ENCODE measurements at regions of chrX and their contacts with region 1.

Region 1: DNA sequence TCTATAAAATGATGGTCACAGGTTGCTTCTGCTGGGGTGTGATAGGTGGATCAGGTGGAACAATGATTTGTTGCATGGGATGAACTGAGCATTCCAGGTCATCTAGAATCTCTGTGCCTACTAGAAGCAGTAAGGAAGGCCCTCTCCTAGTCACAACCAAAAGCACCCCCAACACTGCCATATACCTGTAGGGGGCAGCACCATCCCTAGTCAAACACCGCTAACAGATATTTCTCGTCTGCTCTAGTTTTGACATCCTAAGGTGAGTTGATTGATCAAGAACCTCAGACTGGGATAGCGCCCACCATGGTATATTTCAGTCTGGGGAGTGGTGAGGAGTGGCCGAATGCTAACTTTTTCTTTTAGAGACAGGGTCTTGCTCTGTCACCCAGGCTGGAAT is 160.2 kb downstream of the NHS start:
- DNase-seq: peak; percentile 49 to 82
- H3K4me3 ChIP-seq: no peak overlapping the region
- H3K4me1 ChIP-seq: no peaks in the 10 kb centered on the region
- H3K27me3 ChIP-seq: no peaks in the 10 kb centered on the region

Region 2: DNA sequence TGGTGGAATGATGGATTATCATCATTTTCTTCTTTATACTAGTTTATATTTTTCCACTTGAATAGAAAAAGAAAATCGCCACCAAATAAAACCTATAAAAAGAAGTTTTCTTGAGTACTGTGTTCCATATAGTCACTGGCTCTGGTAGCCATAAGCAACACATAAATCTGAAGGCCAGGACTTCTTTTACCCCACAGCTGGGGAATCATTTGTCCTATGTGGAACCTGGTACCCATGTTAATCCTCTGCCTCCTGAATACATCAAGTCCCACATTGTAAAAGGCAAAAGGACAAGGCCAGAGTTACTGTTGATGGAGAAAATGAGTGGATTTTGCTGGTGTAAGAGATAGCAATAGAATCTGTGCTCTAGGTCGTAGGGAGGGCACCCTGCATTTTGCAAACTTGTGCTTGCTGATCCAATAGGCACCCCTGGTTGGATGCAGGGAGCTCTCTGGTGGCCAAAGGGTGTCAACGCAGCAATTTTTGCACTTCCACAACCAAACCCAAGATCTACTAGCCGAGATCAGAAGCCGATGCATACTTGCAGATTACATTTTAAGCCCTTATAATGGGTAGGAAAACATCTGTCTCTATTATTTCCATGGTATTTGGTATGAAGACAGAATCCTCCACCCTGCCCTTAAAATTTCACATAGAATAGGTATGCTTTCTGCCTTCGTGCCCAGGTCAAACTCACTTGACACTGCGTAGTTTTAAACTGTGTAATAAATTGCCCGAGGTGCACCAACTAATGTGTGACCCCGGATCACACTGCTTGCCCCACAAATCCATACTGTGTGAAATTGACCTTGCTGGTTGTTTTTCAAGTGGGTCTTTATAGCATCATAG is 55.9 kb after region 1 on chrX:
- in situ Hi-C with region 1: loop called (anchors 5 kb)
- DNase-seq: peak; percentile 79 to 80
- H3K4me3 ChIP-seq: no peak overlapping the region
- H3K4me1 ChIP-seq: peaks cover 30% of the 10 kb centered on the region
- H3K27me3 ChIP-seq: no peaks in the 10 kb centered on the region

Measured in HAP-1 (cell line).